Dendritic cell treated with granulocyte-macrophage colony-stimulating factor and Interleukin-4, amounts not matched to agents 40 ng/mL and 50 ng/mL, for 4 days (primary cell): ENCODE measurements at regions of chr17 and their contacts with region 1.

Region 1: GRCh38 chr17:40417609-40418427 is at the start of gene TOP2A:
- H3K4me3 Mint-ChIP-seq: peak within 1 kb of the TSS; percentile 97
- H3K27ac Mint-ChIP-seq: peak within 1 kb of the TSS; percentile 73
- H3K4me1 Mint-ChIP-seq: peaks cover 20% of the 10 kb centered on the region
- H3K27me3 Mint-ChIP-seq: no peaks in the 10 kb centered on the region

Region 2: GRCh38 chr17:40203131-40203530 is 214.7 kb before region 1 on chr17:
- intact Hi-C with region 1: loop called (anchors 5 kb)
- H3K4me3 Mint-ChIP-seq: no peak overlapping the region
- H3K27ac Mint-ChIP-seq: no peak overlapping the region
- H3K4me1 Mint-ChIP-seq: peaks cover 12% of the 10 kb centered on the region
- H3K27me3 Mint-ChIP-seq: peaks cover 12% of the 10 kb centered on the region

Region 3: DNA sequence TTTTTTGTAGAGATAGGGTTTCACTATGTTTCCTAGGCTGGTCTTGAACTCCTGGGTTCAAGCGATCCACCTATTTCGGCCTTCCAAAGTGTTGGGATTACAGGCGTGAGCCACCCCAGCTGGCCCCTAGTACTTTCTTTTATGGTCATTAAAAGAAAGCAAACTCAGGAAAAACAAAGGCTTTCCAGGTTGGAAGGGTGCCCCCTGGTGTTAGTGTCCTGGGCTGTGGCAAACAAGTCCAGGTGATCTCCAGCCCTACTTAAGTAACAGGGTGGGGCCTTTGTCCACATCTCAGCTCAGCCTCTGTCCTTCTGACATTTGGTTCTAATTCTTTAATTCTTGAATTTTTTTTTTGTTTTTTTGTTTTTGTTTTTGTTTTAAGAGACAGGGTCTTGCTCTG is 32.4 kb after region 1 on chr17:
- intact Hi-C with region 1: no loop called
- H3K4me3 Mint-ChIP-seq: no peak overlapping the region
- H3K27ac Mint-ChIP-seq: no peak overlapping the region
- H3K4me1 Mint-ChIP-seq: peaks cover 28% of the 10 kb centered on the region
- H3K27me3 Mint-ChIP-seq: peaks cover 43% of the 10 kb centered on the region